ENCODE measurements at regions of chr3 and their contacts with region 1.

Region 1: GRCh38 chr3:166764698-166765318 is 615.3 kb downstream of the ZBBX start:
- DNase-seq: no peak
- H3K4me3 ChIP-seq: no peak overlapping the region
- H3K27ac ChIP-seq: no peak overlapping the region
- H3K4me1 ChIP-seq: no peaks in the 10 kb centered on the region
- CTCF ChIP-seq: no peak

Region 2: DNA sequence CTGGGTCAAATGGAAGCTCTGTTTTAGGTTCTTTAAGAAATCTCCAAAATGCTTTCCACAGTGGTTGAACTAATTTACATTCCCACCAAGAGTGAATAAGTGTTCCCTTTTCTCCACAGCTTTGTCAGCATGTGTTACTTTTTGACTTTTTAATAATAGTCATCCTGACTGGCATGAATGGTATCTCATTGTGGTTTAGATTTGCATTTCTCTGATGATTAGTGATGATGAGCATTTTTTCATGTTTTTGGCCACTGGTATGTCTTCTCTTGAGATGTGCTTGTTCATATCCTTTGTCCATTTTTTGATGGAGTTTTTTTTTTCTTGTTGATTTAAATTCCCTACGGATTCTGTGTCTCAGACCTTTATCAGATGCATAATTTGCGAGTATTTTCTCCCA is 182.6 kb before region 1 on chr3:
- CTCF ChIA-PET with region 1: no interaction called
- POLR2A ChIA-PET with region 1: no interaction called
- intact Hi-C with region 1: no loop called
- DNase-seq: no peak
- H3K4me3 ChIP-seq: no peak overlapping the region
- H3K27ac ChIP-seq: no peak overlapping the region
- H3K4me1 ChIP-seq: no peaks in the 10 kb centered on the region
- CTCF ChIP-seq: no peak

Region 3: DNA sequence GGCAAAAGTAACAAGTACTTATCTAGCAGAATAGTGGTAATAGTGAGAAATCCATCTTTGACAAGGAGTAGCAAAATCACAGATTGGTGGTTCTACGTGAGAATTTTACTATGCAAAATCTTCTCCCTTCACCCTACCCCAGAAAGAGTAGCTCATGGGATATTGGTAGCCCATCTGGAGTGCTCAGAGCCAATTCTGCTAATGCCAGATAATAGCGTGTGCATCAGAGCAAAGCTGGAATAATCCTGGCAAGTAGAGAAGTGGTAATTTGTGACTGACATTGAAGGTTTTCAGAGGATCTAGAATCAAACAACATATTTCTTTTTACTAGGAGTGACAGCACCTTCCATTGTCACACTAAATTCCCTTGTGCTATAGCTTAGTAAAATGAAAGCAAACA is 422.4 kb after region 1 on chr3:
- CTCF ChIA-PET with region 1: no interaction called
- POLR2A ChIA-PET with region 1: interaction called, 11 read pairs
- intact Hi-C with region 1: no loop called
- DNase-seq: no peak
- H3K4me3 ChIP-seq: no peak overlapping the region
- H3K27ac ChIP-seq: no peak overlapping the region
- H3K4me1 ChIP-seq: no peaks in the 10 kb centered on the region
- CTCF ChIP-seq: no peak

Measured in OCI-LY7 (cell line).